ENCODE measurements at regions of chr3 and their contacts with region 1.

Region 1: DNA sequence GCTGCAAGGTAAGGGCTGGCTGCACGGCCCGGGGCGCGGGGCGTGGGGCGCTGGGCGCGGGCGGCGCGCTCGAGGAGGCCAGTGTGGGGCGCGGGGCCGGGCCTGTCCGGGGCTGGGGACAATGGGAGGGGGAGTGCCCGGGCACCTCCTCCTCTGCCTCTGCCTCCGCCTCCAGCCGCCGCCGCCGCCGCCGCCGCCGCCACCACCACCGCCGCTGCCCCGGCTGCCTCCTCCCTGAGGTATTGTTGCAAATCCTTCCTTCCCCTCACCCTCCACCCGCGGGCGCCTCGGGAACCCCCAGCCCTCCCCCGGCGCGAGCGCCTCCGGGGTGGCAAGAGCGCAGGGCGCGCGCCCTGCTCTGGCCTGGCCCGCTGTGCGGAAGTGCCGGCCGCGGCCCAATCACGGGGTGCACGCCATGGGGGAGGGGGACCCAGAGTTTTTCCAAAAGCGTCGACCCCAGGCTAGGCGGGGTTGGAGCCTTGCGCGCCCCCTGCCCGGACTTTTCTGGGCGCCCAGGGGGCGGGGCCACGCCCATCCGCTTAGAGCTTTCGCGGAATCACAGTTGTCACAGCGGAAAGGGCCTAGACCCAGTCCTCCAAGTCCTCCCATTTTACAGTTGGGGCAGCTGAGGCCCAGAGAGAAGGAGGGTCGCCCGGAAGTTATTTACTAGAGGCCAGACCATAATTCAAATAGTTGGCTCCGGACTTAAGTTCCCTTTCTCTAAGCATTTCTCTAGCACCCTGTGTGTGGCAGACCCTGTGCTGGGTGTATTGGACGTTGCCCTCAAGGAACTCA is at the start of gene LPP:
- DNase-seq: no peak
- ATAC-seq: peak; percentile 94
- H3K4me3 ChIP-seq: peak within 1 kb of the TSS; percentile 81 to 95
- H3K27ac ChIP-seq: peak within 1 kb of the TSS; percentile 93
- H3K4me1 ChIP-seq: peaks cover 36% of the 10 kb centered on the region
- H3K27me3 ChIP-seq: no peaks in the 10 kb centered on the region
- CTCF ChIP-seq: no peak; the same call in 1 of the 2 replicates
- total RNA-seq, gene LPP: 90.0 TPM

Region 2: GRCh38 chr3:188262913-188263683 is 108.9 kb after region 1 on chr3:
- CTCF ChIA-PET with region 1: no interaction called
- POLR2A ChIA-PET with region 1: no interaction called
- in situ Hi-C with region 1: no loop called
- intact Hi-C with region 1: loop called (anchors 10 kb)
- DNase-seq: peak; percentile 95
- ATAC-seq: peak; percentile 74
- H3K4me3 ChIP-seq: peak overlapping the region in 1 of 2 experiments; percentile 32; a peak in 2 of 4 replicates
- H3K27ac ChIP-seq: peak overlapping the region; percentile 73
- H3K4me1 ChIP-seq: peaks cover 94% of the 10 kb centered on the region
- H3K27me3 ChIP-seq: no peaks in the 10 kb centered on the region
- CTCF ChIP-seq: no peak

Region 3: GRCh38 chr3:188947401-188948280 is 793.4 kb after region 1 on chr3:
- CTCF ChIA-PET with region 1: no interaction called
- POLR2A ChIA-PET with region 1: no interaction called
- in situ Hi-C with region 1: no loop called
- intact Hi-C with region 1: loop called (anchors 2 kb)
- DNase-seq: peak; percentile 88
- ATAC-seq: peak; percentile 88
- H3K4me3 ChIP-seq: peak overlapping the region; percentile 49 to 60
- H3K27ac ChIP-seq: peak overlapping the region; percentile 89
- H3K4me1 ChIP-seq: peaks cover 39% of the 10 kb centered on the region
- H3K27me3 ChIP-seq: no peaks in the 10 kb centered on the region
- CTCF ChIP-seq: peak; percentile 72

Measured in Panc1 (cell line).